CD8-positive, alpha-beta T cell (primary cell): ENCODE measurements at regions of chr1 and their contacts with region 1.

Region 1: GRCh38 chr1:25572708-25573600 is 29.5 kb downstream of the LDLRAP1 start:
- DNase-seq: peak in 7 of 9 experiments; percentile 25 to 70 (median 60)
- ATAC-seq: peak; percentile 78
- H3K4me3 ChIP-seq: no peak overlapping the region
- H3K4me3 Mint-ChIP-seq: no peak overlapping the region
- H3K27ac ChIP-seq: no peak overlapping the region
- H3K27ac Mint-ChIP-seq: peak overlapping the region; percentile 66
- H3K4me1 ChIP-seq: peaks cover 57% of the 10 kb centered on the region
- H3K4me1 Mint-ChIP-seq: peaks cover 62% of the 10 kb centered on the region
- H3K27me3 ChIP-seq: no peaks in the 10 kb centered on the region
- H3K27me3 Mint-ChIP-seq: no peaks in the 10 kb centered on the region
- CTCF ChIP-seq: peak; percentile 75

Region 2: GRCh38 chr1:25529518-25530185 is 43.3 kb before region 1 on chr1:
- CTCF ChIA-PET with region 1: interaction called, 4 read pairs
- POLR2A ChIA-PET with region 1: interaction called, 3 read pairs
- intact Hi-C with region 1: loop called in 1 of 2 experiments (anchors 5 kb)
- DNase-seq: no peak
- ATAC-seq: no peak
- H3K4me3 ChIP-seq: no peak overlapping the region
- H3K4me3 Mint-ChIP-seq: no peak overlapping the region
- H3K27ac ChIP-seq: no peak overlapping the region
- H3K27ac Mint-ChIP-seq: no peak overlapping the region
- H3K4me1 ChIP-seq: peaks cover 3% of the 10 kb centered on the region
- H3K4me1 Mint-ChIP-seq: peaks cover 6% of the 10 kb centered on the region
- H3K27me3 ChIP-seq: no peaks in the 10 kb centered on the region
- H3K27me3 Mint-ChIP-seq: no peaks in the 10 kb centered on the region
- CTCF ChIP-seq: no peak

Region 3: GRCh38 chr1:25543425-25544242 is 29.3 kb before region 1 on chr1 and contains the start of gene LDLRAP1:
- CTCF ChIA-PET with region 1: interaction called, 106 read pairs
- POLR2A ChIA-PET with region 1: interaction called, 121 read pairs
- intact Hi-C with region 1: no loop called
- DNase-seq: peak; percentile 22 to 79 (median 56)
- ATAC-seq: peak; percentile 72
- H3K4me3 ChIP-seq: peak within 1 kb of the TSS; percentile 50 to 62
- H3K4me3 Mint-ChIP-seq: peak within 1 kb of the TSS; percentile 94
- H3K27ac ChIP-seq: peak within 1 kb of the TSS; percentile 16 to 56
- H3K27ac Mint-ChIP-seq: peak within 1 kb of the TSS; percentile 91
- H3K4me1 ChIP-seq: peaks cover 42% of the 10 kb centered on the region
- H3K4me1 Mint-ChIP-seq: peaks cover 49% of the 10 kb centered on the region
- H3K27me3 ChIP-seq: no peaks in the 10 kb centered on the region
- H3K27me3 Mint-ChIP-seq: no peaks in the 10 kb centered on the region
- CTCF ChIP-seq: no peak
- total RNA-seq, gene LDLRAP1: 46.1 to 49.5 TPM

Region 4: GRCh38 chr1:25549273-25550154 is 23.4 kb before region 1 on chr1:
- CTCF ChIA-PET with region 1: interaction called, 106 read pairs
- POLR2A ChIA-PET with region 1: interaction called, 121 read pairs
- intact Hi-C with region 1: no loop called
- DNase-seq: peak; percentile 32 to 86 (median 80)
- ATAC-seq: peak; percentile 93
- H3K4me3 ChIP-seq: peak overlapping the region; percentile 19 to 36
- H3K4me3 Mint-ChIP-seq: peak overlapping the region; percentile 77
- H3K27ac ChIP-seq: peak overlapping the region; percentile 57 to 65
- H3K27ac Mint-ChIP-seq: peak overlapping the region; percentile 96
- H3K4me1 ChIP-seq: peaks cover 96% of the 10 kb centered on the region
- H3K4me1 Mint-ChIP-seq: peaks cover 96% of the 10 kb centered on the region
- H3K27me3 ChIP-seq: no peaks in the 10 kb centered on the region
- H3K27me3 Mint-ChIP-seq: no peaks in the 10 kb centered on the region
- CTCF ChIP-seq: no peak

Region 5: GRCh38 chr1:25556791-25557476 is 16.0 kb before region 1 on chr1:
- CTCF ChIA-PET with region 1: interaction called, 106 read pairs
- POLR2A ChIA-PET with region 1: interaction called, 121 read pairs
- intact Hi-C with region 1: no loop called
- DNase-seq: peak in 7 of 9 experiments; percentile 27 to 80 (median 57)
- ATAC-seq: peak; percentile 55
- H3K4me3 ChIP-seq: no peak overlapping the region
- H3K4me3 Mint-ChIP-seq: peak overlapping the region; percentile 61
- H3K27ac ChIP-seq: peak overlapping the region; percentile 22 to 68
- H3K27ac Mint-ChIP-seq: peak overlapping the region; percentile 96
- H3K4me1 ChIP-seq: peaks cover 99% of the 10 kb centered on the region
- H3K4me1 Mint-ChIP-seq: peaks cover 98% of the 10 kb centered on the region
- H3K27me3 ChIP-seq: no peaks in the 10 kb centered on the region
- H3K27me3 Mint-ChIP-seq: no peaks in the 10 kb centered on the region
- CTCF ChIP-seq: no peak